Caco-2 (cell line): ENCODE measurements at regions of chr7 and their contacts with region 1.

Region 1: DNA sequence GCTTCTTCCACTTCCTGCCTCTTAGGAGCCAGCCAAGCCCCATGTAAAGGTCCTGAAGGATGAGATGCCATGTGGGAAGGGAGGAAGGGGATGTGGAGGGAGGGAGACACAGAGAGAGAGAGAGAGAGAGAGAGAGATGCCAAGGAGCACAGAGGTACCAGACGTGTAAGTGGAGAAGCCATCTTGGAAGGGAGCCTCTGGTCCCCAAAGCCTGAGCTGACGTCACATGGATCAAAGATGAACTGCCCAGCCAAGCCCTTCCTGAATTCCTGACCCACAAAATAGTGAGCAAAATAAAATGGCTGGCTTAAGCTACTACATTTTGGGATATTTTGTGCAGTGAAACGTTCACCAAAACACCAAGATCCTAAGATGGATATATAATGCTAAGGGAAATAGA is 112.0 kb downstream of the TRIL start:
- DNase-seq: no peak
- H3K4me3 ChIP-seq: no peak overlapping the region
- H3K4me3 Mint-ChIP-seq: no peak overlapping the region
- H3K27ac Mint-ChIP-seq: no peak overlapping the region
- H3K4me1 ChIP-seq: no peaks in the 10 kb centered on the region
- H3K4me1 Mint-ChIP-seq: peaks cover 5% of the 10 kb centered on the region
- H3K27me3 ChIP-seq: no peaks in the 10 kb centered on the region
- H3K27me3 Mint-ChIP-seq: peaks cover 5% of the 10 kb centered on the region
- CTCF ChIP-seq: no peak

Region 2: GRCh38 chr7:28815369-28815927 is 30.7 kb before region 1 on chr7:
- CTCF ChIA-PET with region 1: no interaction called
- POLR2A ChIA-PET with region 1: no interaction called
- intact Hi-C with region 1: loop called (anchors 1 kb)
- DNase-seq: no peak
- H3K4me3 ChIP-seq: no peak overlapping the region
- H3K4me3 Mint-ChIP-seq: no peak overlapping the region
- H3K27ac Mint-ChIP-seq: no peak overlapping the region
- H3K4me1 ChIP-seq: no peaks in the 10 kb centered on the region
- H3K4me1 Mint-ChIP-seq: no peaks in the 10 kb centered on the region
- H3K27me3 ChIP-seq: no peaks in the 10 kb centered on the region
- H3K27me3 Mint-ChIP-seq: no peaks in the 10 kb centered on the region
- CTCF ChIP-seq: no peak

Region 3: DNA sequence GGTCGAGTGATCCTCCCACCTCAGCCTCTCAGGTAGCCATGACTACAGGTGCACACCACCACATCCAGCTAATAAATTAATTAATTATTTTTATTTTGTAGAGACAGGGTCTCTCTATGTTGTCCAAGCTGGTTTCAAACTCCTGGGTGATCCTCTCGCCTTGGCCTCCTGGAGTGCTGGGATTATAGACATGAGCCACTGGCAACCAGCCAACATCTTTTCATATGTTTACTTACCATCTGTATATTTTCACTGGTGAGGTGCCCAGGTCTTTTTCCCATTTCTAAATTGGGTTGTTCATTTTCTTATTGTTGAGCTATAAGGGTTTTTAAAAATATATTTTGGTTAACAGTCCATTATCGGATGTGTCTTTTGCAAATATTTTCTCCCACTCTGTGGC is 210.9 kb after region 1 on chr7:
- CTCF ChIA-PET with region 1: no interaction called
- POLR2A ChIA-PET with region 1: no interaction called
- intact Hi-C with region 1: no loop called
- DNase-seq: no peak
- H3K4me3 ChIP-seq: no peak overlapping the region
- H3K4me3 Mint-ChIP-seq: no peak overlapping the region
- H3K27ac Mint-ChIP-seq: no peak overlapping the region
- H3K4me1 ChIP-seq: no peaks in the 10 kb centered on the region
- H3K4me1 Mint-ChIP-seq: no peaks in the 10 kb centered on the region
- H3K27me3 ChIP-seq: no peaks in the 10 kb centered on the region
- H3K27me3 Mint-ChIP-seq: no peaks in the 10 kb centered on the region
- CTCF ChIP-seq: no peak